SK-N-SH (cell line): ENCODE measurements at regions of chr16 and their contacts with region 1.

Region 1: GRCh38 chr16:46801428-46802049 is 29.4 kb downstream of the C16orf87 start:
- DNase-seq: peak; percentile 44
- H3K4me3 ChIP-seq: no peak overlapping the region; a peak in 1 of 4 replicates
- H3K27ac ChIP-seq: no peak overlapping the region
- H3K4me1 ChIP-seq: no peaks in the 10 kb centered on the region; a peak in 1 of 4 replicates
- H3K27me3 ChIP-seq: no peaks in the 10 kb centered on the region
- CTCF ChIP-seq: peak; percentile 68
- EP300 ChIP-seq: no peak
- RAD21 ChIP-seq: peak; percentile 62

Region 2: GRCh38 chr16:46789499-46790414 is 11.8 kb before region 1 on chr16:
- CTCF ChIA-PET with region 1: interaction called, 16 read pairs
- POLR2A ChIA-PET with region 1: interaction called, 5 read pairs
- DNase-seq: peak; percentile 93
- H3K4me3 ChIP-seq: peak overlapping the region; percentile 58 to 61
- H3K27ac ChIP-seq: peak overlapping the region in 1 of 2 experiments; percentile 41; a peak in 1 of 4 replicates
- H3K4me1 ChIP-seq: no peaks in the 10 kb centered on the region; a peak in 1 of 4 replicates
- H3K27me3 ChIP-seq: no peaks in the 10 kb centered on the region
- CTCF ChIP-seq: no peak
- EP300 ChIP-seq: no peak
- RAD21 ChIP-seq: no peak

Region 3: DNA sequence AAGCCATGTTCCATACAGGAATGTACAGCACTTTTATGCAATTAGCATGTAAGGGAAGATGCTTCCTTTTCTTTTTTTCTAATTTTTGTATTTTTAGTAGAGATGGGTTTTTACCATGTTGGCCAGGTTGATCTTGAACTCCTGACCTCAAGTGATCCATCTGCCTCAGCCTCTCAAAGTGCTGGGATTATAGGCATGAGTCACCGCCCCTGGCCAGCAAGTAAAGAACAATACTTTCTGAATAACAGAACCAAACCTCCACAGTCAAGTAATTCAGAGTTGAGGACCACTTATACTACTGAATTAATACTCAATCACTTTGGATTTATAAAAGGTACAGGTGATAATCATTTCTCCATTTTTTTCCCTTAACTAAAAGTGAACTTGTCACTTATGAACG is 16.4 kb after region 1 on chr16:
- CTCF ChIA-PET with region 1: interaction called, 12 read pairs
- POLR2A ChIA-PET with region 1: no interaction called
- DNase-seq: no peak
- H3K4me3 ChIP-seq: no peak overlapping the region
- H3K27ac ChIP-seq: no peak overlapping the region
- H3K4me1 ChIP-seq: no peaks in the 10 kb centered on the region; a peak in 1 of 4 replicates
- H3K27me3 ChIP-seq: no peaks in the 10 kb centered on the region
- CTCF ChIP-seq: no peak
- EP300 ChIP-seq: no peak
- RAD21 ChIP-seq: no peak

Region 4: GRCh38 chr16:47058295-47059086 is 257.0 kb after region 1 on chr16:
- CTCF ChIA-PET with region 1: no interaction called
- POLR2A ChIA-PET with region 1: no interaction called
- DNase-seq: no peak
- H3K4me3 ChIP-seq: no peak overlapping the region
- H3K27ac ChIP-seq: no peak overlapping the region
- H3K4me1 ChIP-seq: no peaks in the 10 kb centered on the region; a peak in 1 of 4 replicates
- H3K27me3 ChIP-seq: no peaks in the 10 kb centered on the region
- CTCF ChIP-seq: no peak
- EP300 ChIP-seq: no peak
- RAD21 ChIP-seq: no peak